ENCODE measurements at regions of chr17 and their contacts with region 1.

Region 1: DNA sequence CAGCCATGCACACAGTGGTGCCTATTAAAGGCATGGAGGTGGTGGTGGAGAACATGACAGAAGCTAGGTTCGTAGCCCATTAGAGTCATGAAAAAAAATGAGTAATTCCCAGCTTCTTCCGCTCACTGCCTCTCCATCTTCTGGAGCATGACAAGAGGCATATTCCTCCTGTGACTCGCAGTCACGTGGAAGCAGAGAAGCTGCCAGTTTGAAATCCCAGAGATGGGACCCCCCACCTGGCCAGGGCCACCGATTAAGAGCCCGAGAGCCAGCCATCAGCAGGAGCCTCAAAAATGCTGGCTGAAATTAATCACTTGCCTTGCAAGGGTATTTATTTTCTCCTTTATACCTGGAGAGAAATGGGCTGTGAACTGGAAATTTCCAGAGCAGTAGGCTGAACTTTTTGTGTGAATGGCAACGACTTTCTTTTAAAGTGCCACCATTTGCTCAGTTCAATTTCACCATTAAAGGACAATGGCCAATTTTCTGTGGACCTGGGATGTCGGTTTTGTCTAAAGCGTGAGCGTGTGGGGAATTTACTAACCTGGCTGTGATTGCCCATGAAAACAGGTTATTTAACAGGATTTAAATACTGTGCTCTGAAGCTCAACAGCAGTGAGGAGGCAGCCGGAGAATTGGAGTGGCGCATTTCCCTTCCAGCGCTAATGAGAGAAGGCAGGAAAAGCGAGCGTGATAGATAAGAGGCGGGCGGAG is 189.7 kb upstream of the SDK2 start:
- DNase-seq: no peak
- H3K4me3 ChIP-seq: no peak overlapping the region
- H3K27ac ChIP-seq: no peak overlapping the region
- H3K27me3 ChIP-seq: peaks cover 0 to 8% (median 0%) of the 10 kb centered on the region in 45 donors
- CTCF ChIP-seq: no peak

Region 2: DNA sequence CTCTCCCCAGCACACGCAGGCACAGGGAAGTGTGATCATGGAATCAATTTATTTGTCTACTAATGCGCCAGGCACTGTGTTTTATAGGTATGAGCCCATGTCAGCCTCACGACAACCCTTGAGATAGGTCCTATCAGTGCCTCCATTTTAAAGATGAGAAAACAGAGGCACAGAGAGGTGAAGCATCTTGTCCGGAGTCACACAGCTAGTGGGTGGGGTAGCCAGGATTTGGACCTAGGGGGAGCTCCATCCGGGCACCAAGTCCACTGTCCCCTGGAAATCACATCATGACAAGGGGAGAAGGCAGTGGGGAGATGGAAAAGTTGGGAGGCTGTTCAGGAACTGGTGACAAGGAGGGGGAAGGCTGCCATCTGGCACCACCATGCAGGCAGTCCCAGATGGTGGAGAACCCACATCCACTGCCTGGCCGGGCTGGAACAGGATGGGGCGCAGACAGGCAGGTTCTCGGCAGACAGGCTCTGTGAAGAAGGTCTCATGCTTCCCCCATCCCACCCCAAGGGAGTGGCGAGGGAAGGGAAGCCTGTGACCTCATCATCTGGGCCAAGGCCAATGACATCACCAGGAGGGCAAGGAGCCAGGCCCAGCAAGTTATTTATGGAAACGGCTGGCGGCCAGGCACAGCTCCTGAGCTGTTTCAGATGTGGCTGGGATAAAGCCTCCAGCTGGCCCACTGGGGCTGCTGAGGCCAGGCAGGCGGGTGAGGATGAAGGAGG is 63.6 kb before region 1 on chr17:
- intact Hi-C with region 1: loop called in 1 of 2 experiments (anchors 10 kb)
- DNase-seq: peak; percentile 48 to 91 (median 84)
- H3K4me3 ChIP-seq: peak overlapping the region in 5 of 59 donors; percentile 1 to 32 (median 12)
- H3K27ac ChIP-seq: peak overlapping the region in 25 of 59 donors; percentile 0 to 75 (median 46)
- H3K27me3 ChIP-seq: no peaks in the 10 kb centered on the region
- CTCF ChIP-seq: peak in 6 of 56 donors; percentile 5 to 30 (median 14)

Measured in dorsolateral prefrontal cortex (tissue), 120 donors.